HepG2 (cell line): ENCODE measurements at regions of chr2 and their contacts with region 1.

Region 1: DNA sequence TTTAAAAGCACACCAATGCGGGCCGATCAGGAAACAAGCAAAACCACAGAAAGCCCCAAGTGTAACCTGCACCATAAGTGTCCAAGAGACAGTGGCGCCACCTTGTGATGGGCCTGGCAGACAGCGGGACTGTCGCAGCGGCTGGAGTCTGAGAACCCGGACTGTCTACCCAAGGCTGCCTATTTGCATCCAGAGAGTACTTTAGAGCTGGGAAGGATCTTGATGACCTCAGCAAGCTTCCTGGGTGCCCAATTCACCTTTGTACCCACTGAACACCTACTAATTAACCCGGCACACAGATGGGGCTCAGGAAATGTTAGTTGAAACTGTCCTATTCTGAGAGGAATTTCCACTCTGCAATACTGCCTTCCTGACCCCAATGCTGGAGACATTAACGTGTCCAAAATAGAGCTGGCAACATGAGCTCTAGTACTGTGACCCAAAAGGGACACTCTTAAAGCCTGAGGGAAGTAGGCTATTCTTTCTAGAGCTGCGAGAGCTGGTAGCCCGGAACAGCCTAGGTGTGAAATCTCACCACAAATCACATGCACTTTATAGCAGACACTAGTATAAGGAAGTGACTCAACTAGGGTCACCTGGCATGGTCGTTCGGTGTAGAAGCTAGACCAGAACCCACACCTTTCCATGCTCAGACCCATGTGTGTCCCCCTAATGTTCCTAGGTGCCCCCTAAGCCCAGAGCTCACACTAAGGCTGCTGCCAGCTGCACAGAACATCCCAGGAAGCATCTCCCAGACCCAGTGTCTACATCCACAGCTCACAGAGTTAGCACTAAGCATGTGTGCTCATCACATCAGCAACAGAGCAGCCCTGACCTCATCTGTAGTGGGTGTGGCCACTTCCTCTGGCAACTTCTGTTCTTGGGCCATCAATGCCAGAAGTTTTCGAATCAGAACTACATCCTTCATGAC is 25.4 kb downstream of the POLR1A start:
- DNase-seq: peak; percentile 44
- ATAC-seq: peak; percentile 96
- H3K4me3 ChIP-seq: no peak overlapping the region
- H3K27ac ChIP-seq: peak overlapping the region; percentile 6
- H3K4me1 ChIP-seq: peaks cover 7% of the 10 kb centered on the region
- H3K27me3 ChIP-seq: no peaks in the 10 kb centered on the region
- CTCF ChIP-seq: peak; percentile 94
- EP300 ChIP-seq: no peak
- POLR2A ChIP-seq: no peak
- RAD21 ChIP-seq: peak; percentile 63

Region 2: GRCh38 chr2:85737481-85737880 is 342.8 kb before region 1 on chr2:
- CTCF ChIA-PET with region 1: no interaction called
- POLR2A ChIA-PET with region 1: no interaction called
- in situ Hi-C with region 1: loop called (anchors 10 kb)
- intact Hi-C with region 1: no loop called
- DNase-seq: peak; percentile 63
- ATAC-seq: no peak
- H3K4me3 ChIP-seq: no peak overlapping the region
- H3K27ac ChIP-seq: no peak overlapping the region
- H3K4me1 ChIP-seq: peaks cover 32% of the 10 kb centered on the region
- H3K27me3 ChIP-seq: peaks cover 4 to 29% of the 10 kb centered on the region in 2 experiments; a peak in 3 of 5 replicates
- CTCF ChIP-seq: no peak
- EP300 ChIP-seq: no peak
- POLR2A ChIP-seq: no peak
- RAD21 ChIP-seq: no peak

Region 3: DNA sequence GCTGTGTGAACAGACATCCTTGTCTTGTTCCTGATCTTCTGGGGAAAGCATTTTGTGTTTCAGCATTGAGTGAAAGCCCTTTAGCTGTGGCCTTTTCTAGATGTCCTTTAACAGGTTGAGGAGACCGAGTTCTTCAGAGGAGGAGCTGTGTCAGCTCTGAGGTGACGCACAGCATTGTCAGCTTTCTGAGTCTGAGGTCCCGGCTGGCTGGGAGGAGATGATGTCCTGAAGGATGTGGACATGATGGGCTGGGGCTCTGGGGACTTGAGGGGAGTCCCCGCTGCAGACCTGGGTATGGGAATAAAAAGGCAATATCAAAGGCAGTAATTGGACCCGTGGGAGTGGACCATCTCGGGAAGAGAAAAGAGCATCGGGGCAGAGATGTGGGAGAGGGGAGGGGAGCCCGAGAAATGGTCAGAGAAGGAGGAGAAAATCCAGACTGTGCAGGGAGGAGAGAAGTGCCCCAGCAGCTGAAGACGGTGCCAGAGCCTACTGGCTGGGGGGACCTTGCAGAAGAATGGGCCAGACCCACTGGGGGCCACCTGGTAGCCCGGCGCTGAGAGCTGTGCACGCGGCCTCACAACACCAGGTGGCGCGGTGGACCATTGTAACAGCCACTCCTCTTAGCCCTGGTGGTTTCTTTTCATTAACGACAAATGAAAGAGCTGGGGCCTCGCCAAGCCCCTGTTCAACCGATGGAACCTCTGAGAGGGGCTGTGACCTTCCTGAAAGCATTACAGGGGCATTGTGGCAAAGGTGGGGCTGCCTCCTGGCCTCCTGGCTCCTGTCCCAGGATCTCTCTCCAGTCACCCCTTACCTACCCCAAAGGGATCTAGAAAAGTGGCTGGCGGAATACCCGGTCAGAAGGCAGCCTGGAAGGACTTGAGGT is 253.0 kb before region 1 on chr2:
- CTCF ChIA-PET with region 1: interaction called, 33 read pairs
- POLR2A ChIA-PET with region 1: no interaction called
- in situ Hi-C with region 1: loop called (anchors 5 kb)
- intact Hi-C with region 1: loop called (anchors 1 kb)
- DNase-seq: peak; percentile 48
- ATAC-seq: peak; percentile 99
- H3K4me3 ChIP-seq: peak overlapping the region; percentile 34 to 69 (median 36); a peak in 5 of 6 replicates
- H3K27ac ChIP-seq: no peak overlapping the region
- H3K4me1 ChIP-seq: peaks cover 6% of the 10 kb centered on the region; the same call in 1 of the 2 replicates
- H3K27me3 ChIP-seq: peaks cover 3 to 8% of the 10 kb centered on the region in 2 experiments; a peak in 2 of 5 replicates
- CTCF ChIP-seq: peak; percentile 96
- EP300 ChIP-seq: no peak
- POLR2A ChIP-seq: no peak
- RAD21 ChIP-seq: peak; percentile 93

Region 4: GRCh38 chr2:85888684-85889626 is 191.3 kb before region 1 on chr2 and contains the start of gene ST3GAL5:
- CTCF ChIA-PET with region 1: no interaction called
- POLR2A ChIA-PET with region 1: no interaction called
- in situ Hi-C with region 1: no loop called
- intact Hi-C with region 1: loop called (anchors 1 kb)
- DNase-seq: peak; percentile 73
- ATAC-seq: peak; percentile 92
- H3K4me3 ChIP-seq: peak within 1 kb of the TSS; percentile 58 to 80 (median 69)
- H3K27ac ChIP-seq: no peak within 1 kb of the TSS
- H3K4me1 ChIP-seq: peaks cover 25% of the 10 kb centered on the region
- H3K27me3 ChIP-seq: peaks cover 4 to 31% of the 10 kb centered on the region in 2 experiments
- CTCF ChIP-seq: peak; percentile 81
- EP300 ChIP-seq: no peak
- POLR2A ChIP-seq: no peak
- RAD21 ChIP-seq: peak; percentile 76
- total RNA-seq, gene ST3GAL5: 1.3 TPM in 2 replicates